ENCODE measurements at regions of chr16 and their contacts with region 1.

Region 1: GRCh38 chr16:11407047-11407982 is 62.1 kb downstream of the RMI2 start:
- DNase-seq: peak; percentile 76
- ATAC-seq: peak; percentile 63
- H3K4me3 Mint-ChIP-seq: no peak overlapping the region
- H3K27ac Mint-ChIP-seq: no peak overlapping the region
- H3K4me1 Mint-ChIP-seq: no peaks in the 10 kb centered on the region; the same call in 1 of the 2 replicates
- H3K27me3 Mint-ChIP-seq: no peaks in the 10 kb centered on the region
- CTCF ChIP-seq: peak; percentile 70

Region 2: GRCh38 chr16:11386791-11387546 is 20.3 kb before region 1 on chr16:
- CTCF ChIA-PET with region 1: interaction called, 234 read pairs
- POLR2A ChIA-PET with region 1: no interaction called
- DNase-seq: peak; percentile 86
- ATAC-seq: peak; percentile 85
- H3K4me3 Mint-ChIP-seq: no peak overlapping the region
- H3K27ac Mint-ChIP-seq: no peak overlapping the region; the same call in 1 of the 2 replicates
- H3K4me1 Mint-ChIP-seq: peaks cover 31% of the 10 kb centered on the region
- H3K27me3 Mint-ChIP-seq: peaks cover 2% of the 10 kb centered on the region; the same call in 1 of the 2 replicates
- CTCF ChIP-seq: peak; percentile 59; the same call in 1 of the 2 replicates

Region 3: DNA sequence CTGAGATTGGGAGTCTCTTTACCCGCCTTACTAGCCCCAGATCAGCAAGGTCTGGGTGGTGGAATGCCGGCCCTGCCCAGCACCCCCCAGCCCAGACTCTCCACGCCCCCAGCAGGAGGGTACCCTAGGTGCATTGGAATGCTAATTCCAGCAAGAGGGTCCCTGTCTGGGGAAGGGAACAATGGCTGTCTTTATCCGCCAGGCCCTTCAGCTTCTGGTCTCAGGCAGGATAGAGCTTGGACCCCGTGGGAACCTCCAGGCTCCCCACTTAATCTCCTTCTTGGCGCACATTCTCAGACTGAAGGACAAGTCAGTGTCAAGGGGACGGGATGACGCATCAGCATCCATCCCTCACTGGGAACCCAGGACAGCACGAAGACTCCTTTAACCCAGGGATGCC is 94.3 kb after region 1 on chr16:
- CTCF ChIA-PET with region 1: interaction called, 21 read pairs
- POLR2A ChIA-PET with region 1: interaction called, 3 read pairs
- DNase-seq: peak; percentile 74
- ATAC-seq: peak; percentile 82
- H3K4me3 Mint-ChIP-seq: peak overlapping the region; percentile 29
- H3K27ac Mint-ChIP-seq: no peak overlapping the region
- H3K4me1 Mint-ChIP-seq: peaks cover 49% of the 10 kb centered on the region
- H3K27me3 Mint-ChIP-seq: no peaks in the 10 kb centered on the region; the same call in 1 of the 2 replicates
- CTCF ChIP-seq: no peak

Region 4: GRCh38 chr16:11639925-11640899 is 232.9 kb after region 1 on chr16:
- CTCF ChIA-PET with region 1: interaction called, 15 read pairs
- POLR2A ChIA-PET with region 1: interaction called, 4 read pairs
- DNase-seq: no peak
- ATAC-seq: no peak
- H3K4me3 Mint-ChIP-seq: no peak overlapping the region
- H3K27ac Mint-ChIP-seq: no peak overlapping the region; the same call in 1 of the 2 replicates
- H3K4me1 Mint-ChIP-seq: peaks cover 30% of the 10 kb centered on the region
- H3K27me3 Mint-ChIP-seq: peaks cover 6% of the 10 kb centered on the region; the same call in 1 of the 2 replicates
- CTCF ChIP-seq: no peak

Region 5: DNA sequence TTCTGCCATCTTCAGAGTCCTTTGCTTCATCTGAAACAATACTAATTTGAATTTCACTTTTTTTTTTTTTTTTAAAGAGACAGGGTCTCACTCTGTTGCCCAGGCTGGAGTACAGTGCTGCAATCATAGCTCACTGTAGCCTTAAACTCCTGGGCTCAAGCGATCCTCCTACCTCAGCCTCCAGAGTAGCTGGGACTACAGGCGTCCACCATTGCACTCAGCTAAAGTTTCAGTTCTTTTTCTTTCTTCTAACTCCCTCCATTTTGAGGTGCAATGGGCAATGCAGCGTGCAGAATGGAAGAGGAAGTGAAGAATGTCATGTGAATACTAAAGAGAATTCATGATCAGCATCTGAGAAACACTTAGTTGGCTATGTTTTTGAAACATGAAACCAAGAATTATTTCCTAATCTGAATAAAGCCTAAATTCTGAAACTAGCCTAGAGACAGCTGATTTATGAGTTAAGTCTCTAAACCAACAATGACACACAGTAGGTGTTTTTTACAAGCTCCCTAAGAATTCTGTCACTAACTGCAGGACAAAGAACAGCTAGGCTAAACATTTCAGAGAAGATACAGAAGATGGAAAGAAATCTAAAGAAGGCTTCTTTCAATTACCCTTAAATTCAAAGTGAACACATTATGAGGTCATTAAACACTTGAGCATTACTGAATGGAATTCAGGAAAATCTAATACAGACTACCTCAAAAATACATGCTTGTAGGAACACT is 281.9 kb after region 1 on chr16:
- CTCF ChIA-PET with region 1: interaction called, 10 read pairs
- POLR2A ChIA-PET with region 1: no interaction called
- DNase-seq: no peak
- ATAC-seq: no peak
- H3K4me3 Mint-ChIP-seq: no peak overlapping the region
- H3K27ac Mint-ChIP-seq: no peak overlapping the region
- H3K4me1 Mint-ChIP-seq: no peaks in the 10 kb centered on the region
- H3K27me3 Mint-ChIP-seq: no peaks in the 10 kb centered on the region
- CTCF ChIP-seq: no peak